ENCODE measurements at regions of chr9 and their contacts with region 1.

Region 1: DNA sequence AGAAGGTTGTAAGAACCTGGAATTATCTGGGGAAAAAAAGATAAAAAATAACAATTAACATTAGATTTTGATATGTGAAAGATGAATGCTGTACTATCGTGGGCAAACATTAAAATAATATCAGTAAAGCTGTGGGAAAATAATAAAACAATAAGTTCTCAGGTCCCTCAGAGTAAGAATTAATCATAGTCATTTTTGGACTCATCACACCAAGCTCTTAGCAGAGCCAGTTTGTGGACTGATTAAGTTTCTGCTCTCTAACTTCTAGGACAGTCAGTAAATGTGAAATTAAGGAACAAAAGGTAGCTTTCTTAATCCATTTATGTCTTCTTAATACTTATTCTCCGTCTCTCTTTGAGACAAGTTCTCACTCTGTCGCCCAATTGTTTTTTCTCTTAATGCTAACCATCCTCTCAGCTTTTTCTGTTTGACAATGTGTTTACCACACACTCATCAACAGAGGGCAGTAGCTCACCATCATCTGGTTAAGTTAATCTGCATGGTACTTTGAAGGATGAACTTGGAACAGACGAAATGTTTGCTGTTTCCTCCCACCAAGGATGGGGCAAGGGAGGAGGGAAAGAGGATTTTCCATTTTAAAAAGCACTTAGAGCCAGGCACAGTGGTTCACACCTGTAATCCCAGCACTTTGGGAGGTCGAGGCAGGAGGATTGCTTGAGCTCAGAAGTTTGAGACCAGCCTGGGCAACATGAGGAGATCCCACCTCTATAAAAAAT is 5.3 kb upstream of the ACO1 start:
- DNase-seq: peak; percentile 49
- H3K4me3 Mint-ChIP-seq: no peak overlapping the region
- H3K27ac Mint-ChIP-seq: no peak overlapping the region
- H3K4me1 Mint-ChIP-seq: peaks cover 16% of the 10 kb centered on the region
- H3K27me3 Mint-ChIP-seq: peaks cover 35% of the 10 kb centered on the region

Region 2: DNA sequence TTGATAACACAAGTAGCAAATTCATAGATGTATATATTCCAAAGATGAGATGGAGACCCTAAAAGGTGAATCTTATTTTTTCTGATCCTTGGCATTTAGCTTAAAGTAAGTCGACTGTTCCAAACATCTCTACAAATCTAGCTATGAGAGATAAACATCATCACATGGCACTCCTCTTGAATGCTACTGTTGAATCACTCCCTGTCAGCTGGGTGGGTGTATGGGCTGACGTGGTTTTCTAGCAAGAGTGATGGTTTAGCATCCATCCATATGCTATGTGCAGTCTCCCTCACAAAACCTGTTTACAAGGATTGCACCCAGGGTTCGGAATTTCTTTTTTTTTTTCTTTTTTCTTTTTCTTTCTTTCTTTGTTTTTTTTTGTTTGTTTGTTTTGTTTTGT is 19.0 kb after region 1 on chr9:
- CTCF ChIA-PET with region 1: interaction called, 21 read pairs
- POLR2A ChIA-PET with region 1: no interaction called
- DNase-seq: no peak
- H3K4me3 Mint-ChIP-seq: no peak overlapping the region
- H3K27ac Mint-ChIP-seq: no peak overlapping the region
- H3K4me1 Mint-ChIP-seq: no peaks in the 10 kb centered on the region
- H3K27me3 Mint-ChIP-seq: no peaks in the 10 kb centered on the region

Region 3: GRCh38 chr9:32526041-32526706 is 147.0 kb after region 1 on chr9 and contains the start of gene RIGI:
- CTCF ChIA-PET with region 1: interaction called, 71 read pairs
- POLR2A ChIA-PET with region 1: interaction called, 12 read pairs
- DNase-seq: peak; percentile 83
- H3K4me3 Mint-ChIP-seq: peak within 1 kb of the TSS; percentile 96
- H3K27ac Mint-ChIP-seq: peak within 1 kb of the TSS; percentile 88
- H3K4me1 Mint-ChIP-seq: peaks cover 60% of the 10 kb centered on the region
- H3K27me3 Mint-ChIP-seq: no peaks in the 10 kb centered on the region
- total RNA-seq, gene RIGI: 32.4 to 33.7 TPM

Region 4: DNA sequence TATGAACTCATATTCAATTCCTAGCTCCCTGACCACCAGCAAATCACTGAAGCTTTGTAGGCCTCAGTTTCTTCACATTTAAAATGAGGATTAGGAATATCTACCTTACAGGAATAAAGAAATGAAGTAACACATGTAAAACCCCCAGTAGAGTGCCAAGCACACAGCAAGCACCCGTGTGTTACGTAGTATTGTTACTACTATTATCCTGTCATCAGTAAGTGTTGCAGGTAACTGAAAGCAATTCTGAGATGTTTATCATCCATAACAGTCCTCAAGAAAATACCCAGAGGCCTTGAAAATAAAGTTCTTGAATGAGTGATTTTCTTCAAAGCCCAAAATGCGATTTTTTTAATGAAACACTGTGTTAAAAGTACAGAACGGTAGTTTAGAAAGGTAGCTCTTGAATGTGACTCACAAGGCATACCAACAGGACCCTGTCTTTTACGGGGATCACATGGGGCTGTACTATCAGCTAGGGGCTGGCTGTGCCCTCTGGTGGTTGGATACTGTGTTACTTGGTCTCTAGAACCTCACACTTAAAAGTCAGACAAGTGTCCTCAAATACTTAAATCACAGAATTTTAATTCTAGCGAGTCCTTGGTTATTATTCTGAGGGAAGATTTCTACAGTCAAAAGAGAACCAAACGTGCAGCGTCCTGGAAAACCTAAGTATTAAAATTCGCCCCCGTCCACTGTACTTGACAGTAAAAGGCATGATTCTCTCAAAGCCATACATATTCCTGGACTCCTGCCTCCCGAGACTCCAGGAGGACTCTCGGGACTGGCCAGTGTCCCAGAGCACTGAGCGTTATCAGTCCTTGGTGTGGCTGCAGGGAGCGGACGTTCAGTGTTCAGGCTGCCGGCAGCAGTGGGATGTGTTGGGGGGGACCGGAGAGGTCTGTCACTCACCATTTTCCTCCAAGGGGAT is 193.1 kb after region 1 on chr9:
- CTCF ChIA-PET with region 1: interaction called, 416 read pairs
- POLR2A ChIA-PET with region 1: interaction called, 31 read pairs
- DNase-seq: peak; percentile 81
- H3K4me3 Mint-ChIP-seq: peak overlapping the region; percentile 97
- H3K27ac Mint-ChIP-seq: peak overlapping the region; percentile 96
- H3K4me1 Mint-ChIP-seq: peaks cover 28% of the 10 kb centered on the region
- H3K27me3 Mint-ChIP-seq: peaks cover 1% of the 10 kb centered on the region

Region 5: GRCh38 chr9:32589083-32589723 is 210.0 kb after region 1 on chr9:
- CTCF ChIA-PET with region 1: interaction called, 11 read pairs
- POLR2A ChIA-PET with region 1: no interaction called
- DNase-seq: no peak
- H3K4me3 Mint-ChIP-seq: no peak overlapping the region
- H3K27ac Mint-ChIP-seq: no peak overlapping the region
- H3K4me1 Mint-ChIP-seq: no peaks in the 10 kb centered on the region
- H3K27me3 Mint-ChIP-seq: peaks cover 28% of the 10 kb centered on the region

Measured in activated CD4-positive, alpha-beta memory T cell treated with anti-CD3 and anti-CD28 coated beads, Interleukin-2, amount 10 ng/mL, durations not matched to agents 7 days and 5 days (primary cell).